ENCODE measurements at regions of chr19 and their contacts with region 1.

Region 1: GRCh38 chr19:44841231-44841630 is 4.9 kb upstream of the NECTIN2 start:
- DNase-seq: no peak
- ATAC-seq: no peak

Region 2: DNA sequence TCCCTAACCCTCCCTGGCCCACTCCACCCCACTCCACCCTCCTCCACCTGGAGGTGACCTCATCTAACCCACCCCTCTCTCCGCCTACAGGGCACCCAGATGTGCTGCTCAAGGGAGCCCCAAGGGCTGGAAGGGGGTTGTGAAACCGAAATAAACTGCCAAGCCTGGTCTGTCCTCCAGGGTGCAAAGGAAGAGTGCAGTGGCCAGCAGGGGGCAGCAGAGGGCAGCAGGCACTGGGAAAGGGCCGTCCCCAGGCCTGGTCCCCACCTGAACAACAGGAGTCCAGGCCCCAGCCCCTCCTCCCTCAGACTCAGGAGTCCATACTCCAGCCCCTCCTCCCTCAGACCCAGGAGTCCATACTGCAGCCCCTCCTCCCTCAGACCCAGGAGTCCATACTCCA is 40.8 kb before region 1 on chr19:
- intact Hi-C with region 1: loop called (anchors 5 kb)
- DNase-seq: peak; percentile 91
- ATAC-seq: peak; percentile 92

Region 3: DNA sequence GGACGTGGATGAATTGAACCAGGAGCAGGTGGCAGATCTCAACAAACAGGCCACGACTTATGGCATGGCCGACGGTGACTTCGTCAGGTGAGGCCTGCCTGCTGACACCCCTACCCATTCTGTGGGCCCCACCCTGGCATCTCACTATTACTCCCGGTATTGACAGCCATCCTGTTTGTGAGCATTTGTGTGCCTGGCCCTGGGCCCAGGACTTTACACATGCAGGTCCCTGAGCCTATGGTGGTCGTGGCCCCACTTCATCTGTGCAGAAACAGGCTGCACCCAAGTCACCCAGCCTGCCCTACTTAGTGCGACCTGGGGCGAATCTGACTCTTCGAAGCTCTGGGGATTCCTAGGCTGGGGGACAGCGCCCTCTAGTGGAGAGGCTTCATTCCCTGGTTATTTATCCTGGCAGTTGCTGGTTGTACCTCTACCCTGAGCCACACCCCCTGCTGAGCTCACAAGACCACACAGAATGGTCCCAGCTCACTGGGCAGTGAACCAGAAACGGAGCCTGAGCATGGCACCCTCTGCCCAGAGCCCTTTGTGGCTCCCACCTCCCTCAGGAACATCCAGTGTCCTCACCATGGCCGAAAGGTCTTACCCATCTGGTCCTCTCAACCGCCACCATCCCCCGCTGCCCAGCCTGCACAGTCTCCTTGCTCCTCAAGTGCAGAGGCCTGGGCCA is 218.2 kb after region 1 on chr19:
- intact Hi-C with region 1: no loop called
- DNase-seq: peak; percentile 65
- ATAC-seq: peak; percentile 62

Measured in Right ventricle myocardium superior (tissue), 1 donor.